Activated CD4-positive, alpha-beta memory T cell treated with anti-CD3 and anti-CD28 coated beads, Interleukin-2, amount 10 ng/mL, durations not matched to agents 7 days and 5 days (primary cell): ENCODE measurements at regions of chr22 and their contacts with region 1.

Region 1: DNA sequence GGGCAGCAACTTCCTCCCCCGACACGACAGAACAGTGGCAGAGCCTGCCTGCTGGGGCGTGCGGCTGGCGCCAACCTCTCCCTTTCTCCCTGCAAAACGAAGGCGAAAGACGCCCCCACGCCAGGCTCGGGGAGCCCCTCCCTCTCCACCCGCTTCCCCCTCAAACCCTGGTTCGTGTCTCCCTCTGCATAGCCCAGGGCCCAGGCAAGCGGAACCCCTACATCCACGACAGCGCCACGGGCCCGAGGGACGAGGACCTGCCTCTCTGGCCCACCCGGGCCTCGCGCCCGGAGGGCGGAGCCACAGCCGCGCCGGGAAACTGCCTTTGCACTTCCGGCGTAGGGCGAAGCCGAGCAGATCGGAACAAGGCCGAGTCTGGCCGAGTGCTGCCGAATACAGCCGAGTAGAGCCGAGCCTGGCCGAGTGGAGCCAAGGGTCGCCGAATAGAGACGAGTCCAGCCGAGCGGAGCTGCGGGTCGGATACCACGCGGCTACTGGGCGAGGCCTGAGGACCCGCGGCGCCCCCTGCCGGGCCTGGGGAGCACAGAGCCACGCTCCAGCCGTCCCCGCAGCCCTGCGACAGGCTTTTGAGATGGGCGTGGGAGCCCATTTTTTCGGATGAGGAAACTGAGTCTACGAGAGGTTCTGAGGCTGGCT is 11.2 kb upstream of the C1QTNF6 start:
- DNase-seq: peak; percentile 100
- H3K4me3 Mint-ChIP-seq: peak overlapping the region; percentile 83
- H3K27ac Mint-ChIP-seq: peak overlapping the region; percentile 92
- H3K4me1 Mint-ChIP-seq: peaks cover 36% of the 10 kb centered on the region
- H3K27me3 Mint-ChIP-seq: no peaks in the 10 kb centered on the region

Region 2: GRCh38 chr22:37043828-37044538 is 155.2 kb before region 1 on chr22:
- CTCF ChIA-PET with region 1: interaction called, 33 read pairs
- POLR2A ChIA-PET with region 1: no interaction called
- DNase-seq: peak; percentile 66
- H3K4me3 Mint-ChIP-seq: no peak overlapping the region
- H3K27ac Mint-ChIP-seq: no peak overlapping the region
- H3K4me1 Mint-ChIP-seq: peaks cover 26% of the 10 kb centered on the region
- H3K27me3 Mint-ChIP-seq: peaks cover 6% of the 10 kb centered on the region

Region 3: DNA sequence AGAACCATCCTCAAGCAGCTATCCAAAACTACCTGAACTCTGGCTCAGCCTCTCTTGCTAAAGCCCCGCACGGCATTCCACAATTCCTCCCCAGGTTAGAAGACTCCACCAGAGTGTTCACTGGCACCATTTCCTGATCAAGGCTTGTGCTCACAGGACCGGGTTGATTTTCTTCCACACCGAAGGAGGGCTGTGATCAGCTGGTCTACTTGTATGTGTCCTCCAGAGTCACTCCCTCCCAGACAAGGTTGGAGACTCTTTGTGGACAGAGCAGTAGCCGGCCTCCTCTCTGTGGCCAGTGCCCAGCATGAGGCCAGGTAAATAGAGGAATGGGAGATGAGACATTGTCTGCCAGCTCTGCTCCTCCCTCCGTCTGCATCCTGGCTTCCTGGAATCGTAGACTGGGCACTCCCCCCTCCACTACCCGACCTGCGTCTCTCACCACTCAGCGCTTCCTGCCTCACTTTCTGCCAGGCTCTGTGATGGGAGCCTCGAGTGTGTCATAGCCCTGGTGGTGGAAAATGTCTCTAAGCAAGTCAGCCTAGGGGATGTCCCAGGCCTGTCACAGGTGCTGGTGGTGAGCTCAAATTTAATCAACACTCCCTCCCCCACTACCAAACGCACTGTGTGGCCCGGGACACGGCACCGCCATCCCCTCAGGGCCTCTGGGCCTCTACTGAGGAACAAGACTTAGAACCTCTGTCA is 77.2 kb before region 1 on chr22:
- CTCF ChIA-PET with region 1: interaction called, 15 read pairs
- POLR2A ChIA-PET with region 1: interaction called, 20 read pairs
- DNase-seq: peak; percentile 96
- H3K4me3 Mint-ChIP-seq: peak overlapping the region; percentile 74
- H3K27ac Mint-ChIP-seq: peak overlapping the region; percentile 99
- H3K4me1 Mint-ChIP-seq: peaks cover 88% of the 10 kb centered on the region
- H3K27me3 Mint-ChIP-seq: no peaks in the 10 kb centered on the region

Region 4: DNA sequence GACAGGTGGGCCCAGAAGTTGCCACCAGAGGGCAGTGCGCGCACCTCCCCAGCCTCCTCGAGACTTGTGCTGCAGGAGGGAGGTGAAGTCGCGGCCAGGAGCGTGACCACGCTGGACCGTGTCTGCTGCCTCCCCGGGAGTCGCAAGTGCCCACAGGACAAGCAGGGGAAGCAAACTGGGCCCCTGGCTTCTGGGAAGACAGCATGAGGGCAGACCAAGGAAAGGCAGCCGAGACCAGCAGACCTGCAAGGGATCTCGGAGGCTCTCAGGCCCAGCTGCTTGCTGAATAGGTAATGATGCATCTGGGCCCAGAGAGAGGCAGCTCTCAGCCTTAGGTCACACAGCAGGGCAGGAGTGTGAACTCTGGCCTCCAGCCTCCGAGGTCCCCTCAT is 32.6 kb before region 1 on chr22:
- CTCF ChIA-PET with region 1: interaction called, 60 read pairs
- POLR2A ChIA-PET with region 1: interaction called, 40 read pairs
- DNase-seq: peak; percentile 87
- H3K4me3 Mint-ChIP-seq: peak overlapping the region; percentile 71
- H3K27ac Mint-ChIP-seq: peak overlapping the region; percentile 94
- H3K4me1 Mint-ChIP-seq: peaks cover 85% of the 10 kb centered on the region
- H3K27me3 Mint-ChIP-seq: no peaks in the 10 kb centered on the region

Region 5: DNA sequence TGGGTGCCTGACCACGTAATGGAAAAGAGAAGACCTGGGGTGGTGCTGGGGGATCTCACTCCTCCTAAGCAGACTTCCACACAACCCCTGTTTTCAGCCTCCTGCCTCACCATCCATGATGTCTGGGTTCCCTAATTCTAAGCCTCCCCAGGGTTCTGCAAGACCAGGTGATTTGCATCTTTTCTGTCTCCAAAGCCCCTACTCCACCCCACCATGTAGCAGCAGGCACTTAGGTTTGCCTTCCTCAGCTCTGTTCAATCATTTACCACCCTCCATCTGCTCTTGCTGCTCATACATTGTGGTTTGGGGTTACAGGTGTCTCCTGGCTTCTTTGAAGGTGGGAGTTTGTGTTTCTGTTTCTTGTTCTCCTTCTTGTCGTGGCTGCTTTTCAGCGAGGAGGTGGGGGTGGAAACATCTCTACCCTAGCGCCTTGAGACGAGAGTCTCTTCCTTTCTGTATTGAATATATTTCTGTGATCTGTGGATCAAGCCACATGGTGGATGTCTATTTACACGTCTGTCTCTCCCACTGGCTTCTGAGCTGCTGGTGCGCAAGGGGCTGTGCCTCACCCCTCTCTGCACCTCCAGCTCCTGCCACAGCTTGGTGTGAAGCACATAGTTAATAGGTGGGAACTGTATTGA is 19.7 kb after region 1 on chr22:
- CTCF ChIA-PET with region 1: interaction called, 19 read pairs
- POLR2A ChIA-PET with region 1: interaction called, 45 read pairs
- DNase-seq: peak; percentile 72
- H3K4me3 Mint-ChIP-seq: peak overlapping the region; percentile 63
- H3K27ac Mint-ChIP-seq: peak overlapping the region; percentile 93
- H3K4me1 Mint-ChIP-seq: peaks cover 65% of the 10 kb centered on the region
- H3K27me3 Mint-ChIP-seq: peaks cover 1% of the 10 kb centered on the region

Region 6: DNA sequence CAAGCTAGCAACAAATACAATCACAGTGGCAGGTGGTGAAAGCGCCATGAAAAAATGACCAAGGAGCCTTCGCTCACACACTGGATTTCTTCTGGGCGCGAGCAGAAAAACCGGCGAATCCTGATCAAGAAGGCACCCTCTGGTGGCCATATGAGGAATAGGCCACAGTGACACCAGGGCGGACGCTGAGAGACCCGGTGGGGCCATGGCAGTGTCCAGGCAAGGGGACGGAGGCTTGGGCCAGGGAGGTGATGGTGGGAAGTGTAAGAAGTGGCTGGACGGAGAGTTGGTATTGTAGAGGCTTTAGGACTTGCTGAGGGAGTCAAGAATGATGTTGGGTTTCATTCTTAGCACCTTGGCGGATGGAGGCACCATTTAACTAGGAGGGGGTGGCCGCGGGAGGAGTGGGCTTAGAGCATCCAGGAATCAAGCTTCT is 61.7 kb after region 1 on chr22:
- CTCF ChIA-PET with region 1: interaction called, 20 read pairs
- POLR2A ChIA-PET with region 1: no interaction called
- DNase-seq: peak; percentile 68
- H3K4me3 Mint-ChIP-seq: no peak overlapping the region
- H3K27ac Mint-ChIP-seq: no peak overlapping the region
- H3K4me1 Mint-ChIP-seq: peaks cover 25% of the 10 kb centered on the region
- H3K27me3 Mint-ChIP-seq: peaks cover 10% of the 10 kb centered on the region